Right lobe of liver (tissue), 6 donors: ENCODE measurements at regions of chr5 and their contacts with region 1.

Region 1: GRCh38 chr5:112419986-112420864 is 1.1 kb upstream of the EPB41L4A start:
- DNase-seq: peak; percentile 82 to 86 (median 84)
- ATAC-seq: peak; percentile 87 to 95 (median 90)
- H3K4me3 ChIP-seq: peak overlapping the region; percentile 65 to 71 (median 66)
- H3K27ac ChIP-seq: peak overlapping the region; percentile 38 to 80 (median 62)
- H3K4me1 ChIP-seq: no peaks in the 10 kb centered on the region
- H3K27me3 ChIP-seq: no peaks in the 10 kb centered on the region
- CTCF ChIP-seq: peak; percentile 79 to 88 (median 84)
- POLR2A ChIP-seq: no peak

Region 2: GRCh38 chr5:112208699-112209615 is 211.3 kb before region 1 on chr5:
- intact Hi-C with region 1: loop called in 1 of 2 experiments (anchors 10 kb)
- DNase-seq: no peak
- ATAC-seq: no peak
- H3K4me3 ChIP-seq: no peak overlapping the region
- H3K27ac ChIP-seq: no peak overlapping the region
- H3K4me1 ChIP-seq: no peaks in the 10 kb centered on the region
- H3K27me3 ChIP-seq: no peaks in the 10 kb centered on the region
- CTCF ChIP-seq: no peak
- POLR2A ChIP-seq: no peak

Region 3: GRCh38 chr5:113507601-113508000 is 1087.4 kb after region 1 on chr5:
- intact Hi-C with region 1: no loop called
- DNase-seq: no peak
- ATAC-seq: peak in 1 of 4 donors; percentile 30
- H3K4me3 ChIP-seq: no peak overlapping the region
- H3K27ac ChIP-seq: no peak overlapping the region
- H3K4me1 ChIP-seq: no peaks in the 10 kb centered on the region
- H3K27me3 ChIP-seq: no peaks in the 10 kb centered on the region
- CTCF ChIP-seq: no peak
- POLR2A ChIP-seq: no peak